Naive thymus-derived CD4-positive, alpha-beta T cell (primary cell): ENCODE measurements at regions of chr6 and their contacts with region 1.

Region 1: DNA sequence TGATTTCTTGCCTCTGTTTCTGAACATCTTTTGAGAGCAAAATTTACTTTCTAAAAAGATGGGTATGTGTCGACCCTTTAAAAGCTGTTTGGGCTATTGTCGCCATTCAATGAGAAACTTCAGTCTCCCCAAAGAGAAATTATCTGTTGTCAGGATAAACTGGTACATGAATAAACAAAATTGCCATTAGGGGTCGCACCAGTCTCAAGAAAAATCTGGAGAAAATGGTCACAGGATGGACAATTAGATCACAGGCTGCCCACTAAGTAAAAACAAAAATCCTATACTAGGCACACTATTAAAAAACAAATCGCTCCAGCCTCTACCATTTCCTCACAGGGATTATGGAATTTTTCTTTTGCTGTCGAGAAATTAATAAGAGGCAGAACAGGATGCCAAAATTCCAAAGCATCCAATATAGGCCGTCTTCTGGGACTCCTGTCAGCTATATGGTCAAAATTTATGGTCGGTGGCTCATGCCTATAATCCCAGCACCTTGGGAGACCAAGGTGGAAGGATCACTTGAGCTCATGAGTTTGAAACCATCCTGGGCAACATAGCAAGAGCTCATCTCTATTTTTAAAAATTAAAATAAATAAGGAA is 5.5 kb upstream of the HLA-E start:
- DNase-seq: peak in 4 of 9 donors; percentile 42 to 56 (median 54)
- ATAC-seq: no peak
- H3K4me3 ChIP-seq: no peak overlapping the region
- H3K4me3 Mint-ChIP-seq: no peak overlapping the region
- H3K27ac ChIP-seq: no peak overlapping the region
- H3K27ac Mint-ChIP-seq: peak overlapping the region in 1 of 9 donors; percentile 7
- H3K4me1 ChIP-seq: peaks cover 21 to 23% of the 10 kb centered on the region in 2 donors
- H3K4me1 Mint-ChIP-seq: peaks cover 19 to 49% (median 39%) of the 10 kb centered on the region in 7 donors
- H3K27me3 ChIP-seq: peaks cover 8 to 23% of the 10 kb centered on the region in 2 donors
- H3K27me3 Mint-ChIP-seq: peaks cover 26 to 52% (median 30%) of the 10 kb centered on the region in 5 donors

Region 2: DNA sequence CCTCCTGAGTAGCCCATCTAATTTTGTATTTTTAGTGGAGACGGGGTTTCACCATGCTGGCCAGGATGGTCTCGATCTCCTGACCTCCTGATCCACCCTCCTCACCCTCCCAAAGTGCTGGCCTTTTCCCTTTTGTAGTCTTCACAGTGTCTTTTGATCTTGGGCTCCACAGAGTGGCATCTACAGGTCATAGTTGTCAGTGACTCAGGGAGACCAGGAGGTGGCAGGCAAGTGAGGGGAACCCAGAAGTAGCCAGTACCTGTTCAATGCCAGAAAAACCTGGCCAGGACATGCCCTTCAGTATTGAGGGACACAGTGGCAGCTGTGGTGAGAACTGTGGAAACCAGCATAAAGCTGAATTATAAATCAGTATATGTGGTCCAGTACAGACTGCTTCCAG is 119.2 kb before region 1 on chr6:
- CTCF ChIA-PET with region 1: no interaction called
- POLR2A ChIA-PET with region 1: no interaction called
- intact Hi-C with region 1: no loop called
- DNase-seq: no peak
- ATAC-seq: no peak
- H3K4me3 ChIP-seq: no peak overlapping the region
- H3K4me3 Mint-ChIP-seq: no peak overlapping the region
- H3K27ac ChIP-seq: no peak overlapping the region
- H3K27ac Mint-ChIP-seq: no peak overlapping the region
- H3K4me1 ChIP-seq: no peaks in the 10 kb centered on the region
- H3K4me1 Mint-ChIP-seq: no peaks in the 10 kb centered on the region
- H3K27me3 ChIP-seq: peaks cover 0 to 5% of the 10 kb centered on the region in 2 donors
- H3K27me3 Mint-ChIP-seq: peaks cover 43 to 82% (median 71%) of the 10 kb centered on the region in 5 donors

Region 3: DNA sequence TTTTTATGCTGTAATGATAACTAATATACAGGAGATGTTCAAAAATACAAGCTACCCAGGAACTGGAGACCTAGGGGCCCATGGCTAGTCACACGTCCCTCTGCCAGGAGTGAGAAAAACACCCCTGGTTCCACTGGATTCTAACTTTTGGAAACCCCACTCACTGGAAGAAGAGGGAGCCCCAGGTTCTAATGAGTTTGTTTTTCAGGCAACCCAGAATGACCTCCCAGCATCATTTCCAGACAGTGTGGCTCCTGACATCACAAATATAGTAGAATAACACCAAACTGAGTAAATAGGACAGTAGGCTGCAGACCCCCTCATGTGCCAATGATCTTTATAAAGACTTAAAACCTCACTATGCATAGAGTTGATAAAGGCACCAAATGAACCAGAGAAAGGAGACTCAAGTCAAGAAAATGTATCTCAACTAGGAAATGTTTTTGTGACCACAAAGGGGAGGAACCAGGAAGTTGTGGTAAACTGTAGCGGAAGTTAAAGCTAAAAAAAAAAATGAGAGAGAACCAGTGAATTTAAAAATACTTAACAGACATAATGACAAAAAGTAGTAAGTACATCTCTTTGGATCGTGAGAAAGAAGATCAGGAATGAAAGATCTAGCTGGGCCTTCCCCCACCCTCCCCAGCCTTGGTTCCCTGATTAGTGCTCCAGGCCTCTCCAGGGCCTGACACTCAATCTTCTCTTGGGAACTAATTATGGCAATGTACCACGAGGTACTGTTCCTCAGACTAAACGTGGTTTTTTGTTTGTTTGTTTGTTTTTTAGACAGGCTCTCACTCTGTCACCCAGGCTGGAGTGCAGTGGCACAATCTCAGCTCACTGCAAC is 25.3 kb after region 1 on chr6:
- CTCF ChIA-PET with region 1: interaction called, 18 read pairs
- POLR2A ChIA-PET with region 1: interaction called, 19 read pairs
- intact Hi-C with region 1: no loop called
- DNase-seq: peak in 7 of 9 donors; percentile 72 to 88 (median 86)
- ATAC-seq: peak; percentile 90
- H3K4me3 ChIP-seq: peak overlapping the region; percentile 55
- H3K4me3 Mint-ChIP-seq: peak overlapping the region; percentile 60 to 89 (median 80)
- H3K27ac ChIP-seq: peak overlapping the region; percentile 43
- H3K27ac Mint-ChIP-seq: peak overlapping the region; percentile 73 to 97 (median 85)
- H3K4me1 ChIP-seq: peaks cover 44 to 73% of the 10 kb centered on the region in 2 donors
- H3K4me1 Mint-ChIP-seq: peaks cover 38 to 78% (median 59%) of the 10 kb centered on the region in 7 donors
- H3K27me3 ChIP-seq: no peaks in the 10 kb centered on the region
- H3K27me3 Mint-ChIP-seq: no peaks in the 10 kb centered on the region

Region 4: DNA sequence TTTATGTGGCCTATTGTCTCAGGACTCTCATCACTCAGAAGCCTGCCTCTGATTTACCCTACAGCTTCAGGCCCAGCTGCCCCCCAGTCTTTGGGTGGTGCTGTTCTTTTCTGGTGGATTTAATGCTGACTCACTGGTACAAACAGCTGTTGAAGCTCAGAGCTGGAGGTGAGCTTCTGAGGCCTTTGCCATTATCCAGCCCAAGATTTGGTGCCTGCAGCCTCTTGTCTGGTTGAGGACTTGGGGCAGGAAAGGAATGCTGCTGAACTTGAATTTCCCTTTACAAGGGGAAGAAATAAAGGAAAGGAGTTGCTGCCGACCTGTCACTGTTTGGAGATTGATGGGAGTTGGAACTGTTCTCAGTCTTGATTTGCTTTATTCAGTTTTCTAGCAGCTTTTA is 107.2 kb after region 1 on chr6:
- CTCF ChIA-PET with region 1: interaction called, 128 read pairs
- POLR2A ChIA-PET with region 1: interaction called, 3 read pairs
- intact Hi-C with region 1: no loop called
- DNase-seq: no peak
- ATAC-seq: no peak
- H3K4me3 ChIP-seq: no peak overlapping the region
- H3K4me3 Mint-ChIP-seq: no peak overlapping the region
- H3K27ac ChIP-seq: no peak overlapping the region
- H3K27ac Mint-ChIP-seq: peak overlapping the region in 2 of 9 donors; percentile 24 to 65
- H3K4me1 ChIP-seq: no peaks in the 10 kb centered on the region
- H3K4me1 Mint-ChIP-seq: peaks cover 2 to 17% (median 14%) of the 10 kb centered on the region in 7 donors
- H3K27me3 ChIP-seq: no peaks in the 10 kb centered on the region
- H3K27me3 Mint-ChIP-seq: no peaks in the 10 kb centered on the region

Region 5: DNA sequence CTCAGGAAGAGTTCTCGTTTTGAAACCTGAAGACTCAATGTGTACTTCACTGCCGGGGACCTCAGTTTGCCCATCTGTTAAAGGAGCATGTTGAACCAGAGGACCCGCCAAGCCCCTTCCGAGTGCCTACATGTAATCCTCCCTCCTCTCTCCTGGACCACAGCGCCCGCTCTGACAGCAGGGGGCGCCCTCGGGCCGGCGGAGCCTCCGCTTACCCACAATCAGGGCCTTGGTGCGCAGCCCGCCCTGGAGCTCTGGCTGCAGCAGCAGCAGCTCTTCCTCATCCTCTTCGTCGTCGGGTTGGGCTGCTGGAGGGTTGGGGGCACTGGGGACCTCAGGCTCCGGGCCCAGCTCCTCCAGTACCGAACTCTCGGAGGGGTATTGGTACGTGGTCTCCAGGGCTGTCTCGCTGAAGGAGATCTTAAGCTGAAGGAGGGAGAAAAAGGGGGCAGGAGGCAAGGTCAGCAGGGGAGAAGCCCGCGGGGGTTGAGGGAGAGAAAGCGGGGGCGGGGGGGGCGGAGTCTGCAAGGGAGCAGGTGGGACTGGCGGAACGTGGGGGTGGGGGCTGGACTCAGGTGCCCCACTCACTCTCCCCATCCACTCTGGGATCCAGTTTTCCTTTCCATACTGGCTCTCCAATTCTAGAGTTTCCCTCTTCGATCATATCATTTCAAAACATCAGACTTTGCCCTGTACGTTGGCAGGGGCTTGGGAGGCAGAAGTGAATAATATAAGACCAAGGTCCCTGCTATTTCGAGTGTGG is 195.4 kb after region 1 on chr6:
- CTCF ChIA-PET with region 1: interaction called, 11 read pairs
- POLR2A ChIA-PET with region 1: interaction called, 3 read pairs
- intact Hi-C with region 1: no loop called
- DNase-seq: peak; percentile 86 to 97 (median 92)
- ATAC-seq: peak; percentile 65
- H3K4me3 ChIP-seq: peak overlapping the region; percentile 98
- H3K4me3 Mint-ChIP-seq: peak overlapping the region; percentile 90 to 100 (median 97)
- H3K27ac ChIP-seq: peak overlapping the region; percentile 95
- H3K27ac Mint-ChIP-seq: peak overlapping the region; percentile 85 to 99 (median 97)
- H3K4me1 ChIP-seq: peaks cover 5 to 24% of the 10 kb centered on the region in 2 donors
- H3K4me1 Mint-ChIP-seq: peaks cover 20 to 47% (median 38%) of the 10 kb centered on the region in 7 donors
- H3K27me3 ChIP-seq: no peaks in the 10 kb centered on the region
- H3K27me3 Mint-ChIP-seq: no peaks in the 10 kb centered on the region

Region 6: DNA sequence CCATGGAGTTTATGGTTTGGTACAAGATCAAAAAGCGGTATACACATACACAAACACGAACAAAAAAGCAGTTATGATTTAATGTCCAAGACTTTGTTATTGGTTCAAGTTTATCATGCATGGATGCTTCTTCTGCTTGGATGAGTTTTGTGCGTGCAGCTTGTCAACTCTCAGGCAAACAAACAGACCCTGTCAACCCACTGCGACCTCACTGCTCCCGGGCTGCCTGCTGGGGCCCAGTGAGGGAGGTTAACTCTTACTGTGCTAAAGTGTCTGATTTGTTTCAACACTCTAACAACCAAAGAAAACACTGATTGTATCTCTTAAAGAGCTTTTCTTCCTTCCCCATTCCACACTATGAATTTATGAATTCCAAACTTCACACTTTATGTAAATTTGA is 373.8 kb after region 1 on chr6:
- CTCF ChIA-PET with region 1: no interaction called
- POLR2A ChIA-PET with region 1: no interaction called
- intact Hi-C with region 1: no loop called
- DNase-seq: no peak
- ATAC-seq: no peak
- H3K4me3 ChIP-seq: no peak overlapping the region
- H3K4me3 Mint-ChIP-seq: no peak overlapping the region
- H3K27ac ChIP-seq: no peak overlapping the region
- H3K27ac Mint-ChIP-seq: no peak overlapping the region
- H3K4me1 ChIP-seq: no peaks in the 10 kb centered on the region
- H3K4me1 Mint-ChIP-seq: peaks cover 0 to 5% (median 0%) of the 10 kb centered on the region in 7 donors
- H3K27me3 ChIP-seq: no peaks in the 10 kb centered on the region
- H3K27me3 Mint-ChIP-seq: peaks cover 0 to 6% (median 0%) of the 10 kb centered on the region in 5 donors

Region 7: DNA sequence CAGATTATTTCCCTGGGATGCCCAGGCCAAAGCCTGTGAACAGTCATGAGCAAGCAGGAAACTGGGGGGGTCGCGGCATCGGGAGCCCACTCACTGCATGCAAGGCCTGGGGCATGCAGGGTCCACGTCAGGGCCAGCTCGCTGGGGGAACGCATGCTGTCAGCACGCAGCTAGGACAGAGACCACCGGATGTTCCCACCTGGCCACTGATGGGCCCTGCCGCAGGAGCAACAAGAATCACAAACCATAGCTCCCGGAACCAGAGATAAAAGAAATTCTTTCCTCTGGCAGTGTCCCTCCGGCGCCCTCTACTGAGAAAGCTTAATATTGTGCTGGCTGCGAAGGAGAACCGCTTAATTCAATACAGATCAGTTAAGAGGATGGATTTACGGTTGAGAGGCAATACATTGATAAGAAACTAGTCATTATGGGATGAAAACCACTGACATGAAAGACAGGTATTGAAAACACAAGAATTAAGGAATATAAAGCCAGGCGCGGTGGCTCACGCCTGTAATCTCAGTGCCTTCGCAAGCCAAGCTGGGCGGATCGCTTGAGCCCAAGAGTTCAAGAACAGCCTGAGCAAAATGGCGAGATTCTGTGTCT is 596.0 kb after region 1 on chr6:
- CTCF ChIA-PET with region 1: interaction called, 5 read pairs
- POLR2A ChIA-PET with region 1: no interaction called
- intact Hi-C with region 1: loop called in 1 of 2 experiments (anchors 1 kb)
- DNase-seq: peak; percentile 34 to 77 (median 72)
- ATAC-seq: peak; percentile 93
- H3K4me3 ChIP-seq: peak overlapping the region; percentile 21
- H3K4me3 Mint-ChIP-seq: peak overlapping the region; percentile 37 to 81 (median 66)
- H3K27ac ChIP-seq: no peak overlapping the region
- H3K27ac Mint-ChIP-seq: peak overlapping the region in 4 of 9 donors; percentile 19 to 42 (median 28)
- H3K4me1 ChIP-seq: peaks cover 5 to 6% of the 10 kb centered on the region in 2 donors
- H3K4me1 Mint-ChIP-seq: peaks cover 6 to 9% (median 8%) of the 10 kb centered on the region in 7 donors
- H3K27me3 ChIP-seq: no peaks in the 10 kb centered on the region
- H3K27me3 Mint-ChIP-seq: peaks cover 0 to 26% (median 0%) of the 10 kb centered on the region in 5 donors